MCF 10A (cell line): ENCODE measurements at regions of chr12 and their contacts with region 1.

Region 1: DNA sequence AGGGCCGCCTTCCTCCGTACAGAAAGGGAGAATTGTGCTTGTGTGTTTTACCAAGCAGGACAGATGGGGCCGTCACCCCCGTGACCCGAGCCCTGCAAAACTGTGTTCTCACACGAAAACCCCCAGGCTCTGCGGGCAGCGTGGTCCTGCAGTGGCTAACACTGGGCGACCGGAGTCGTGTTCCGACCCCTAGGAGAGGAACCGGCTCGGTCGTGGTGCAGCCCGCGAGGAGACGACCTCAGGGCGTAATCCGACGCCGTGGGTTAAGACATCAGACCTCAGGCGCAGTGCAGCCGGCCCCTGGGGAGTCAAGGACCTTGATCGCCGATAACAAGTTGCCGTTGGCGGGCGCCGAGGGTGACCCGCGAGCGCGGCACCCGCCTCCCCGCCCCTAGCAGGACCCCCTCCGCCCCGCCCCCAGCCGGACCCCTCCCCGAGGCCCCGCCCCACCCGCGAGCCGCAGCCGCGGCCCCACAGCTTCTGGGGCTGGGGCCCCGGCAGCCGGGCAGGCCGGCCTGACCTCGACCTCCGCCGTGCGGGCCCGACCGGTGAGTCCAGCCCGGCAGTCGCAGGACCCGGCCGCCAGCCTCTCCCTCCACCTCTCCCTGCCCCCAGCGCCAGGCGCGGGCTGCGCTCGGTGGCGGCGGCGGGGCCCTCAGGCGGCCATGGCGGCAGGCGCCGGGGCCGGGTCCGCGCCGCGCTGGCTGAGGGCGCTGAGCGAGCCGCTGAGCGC is at the start of gene CHPT1:
- DNase-seq: peak; percentile 52
- H3K4me3 Mint-ChIP-seq: peak within 1 kb of the TSS; percentile 91
- H3K27ac Mint-ChIP-seq: peak within 1 kb of the TSS; percentile 78
- H3K4me1 Mint-ChIP-seq: peaks cover 38% of the 10 kb centered on the region
- H3K27me3 Mint-ChIP-seq: no peaks in the 10 kb centered on the region
- CTCF ChIP-seq: no peak
- total RNA-seq, gene CHPT1: 28.1 and 33.5 TPM in 2 replicates

Region 2: GRCh38 chr12:101407436-101408345 is 289.7 kb before region 1 on chr12 and contains the start of gene ARL1:
- CTCF ChIA-PET with region 1: no interaction called
- POLR2A ChIA-PET with region 1: interaction called, 18 read pairs
- intact Hi-C with region 1: no loop called
- DNase-seq: peak; percentile 85
- H3K4me3 Mint-ChIP-seq: peak within 1 kb of the TSS; percentile 85
- H3K27ac Mint-ChIP-seq: peak within 1 kb of the TSS; percentile 96
- H3K4me1 Mint-ChIP-seq: peaks cover 10% of the 10 kb centered on the region
- H3K27me3 Mint-ChIP-seq: no peaks in the 10 kb centered on the region
- CTCF ChIP-seq: no peak
- total RNA-seq, gene ARL1: 112 and 175 TPM in 2 replicates

Region 3: DNA sequence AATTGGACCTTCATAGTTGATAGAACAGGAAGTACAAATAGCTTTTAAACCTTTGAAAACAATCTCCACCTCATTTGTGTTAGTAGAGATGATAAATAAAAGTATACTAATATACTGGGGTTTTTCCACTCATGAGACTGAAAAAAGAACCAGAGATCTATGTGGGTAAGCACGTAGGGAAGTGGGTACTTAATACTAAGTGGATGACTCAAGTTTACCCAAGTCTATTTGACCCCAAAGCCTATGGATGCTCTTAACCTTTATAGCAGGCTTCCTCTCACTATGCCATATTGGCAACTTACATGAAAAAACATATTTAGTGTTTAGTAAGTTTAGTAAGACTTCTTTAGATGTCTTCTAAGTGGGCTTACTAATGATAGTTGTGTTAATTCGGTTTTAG is 49.2 kb before region 1 on chr12:
- CTCF ChIA-PET with region 1: no interaction called
- POLR2A ChIA-PET with region 1: no interaction called
- intact Hi-C with region 1: no loop called
- DNase-seq: no peak
- H3K4me3 Mint-ChIP-seq: no peak overlapping the region
- H3K27ac Mint-ChIP-seq: no peak overlapping the region
- H3K4me1 Mint-ChIP-seq: no peaks in the 10 kb centered on the region
- H3K27me3 Mint-ChIP-seq: peaks cover 6% of the 10 kb centered on the region
- CTCF ChIP-seq: no peak

Region 4: GRCh38 chr12:101675555-101675954 is 21.8 kb before region 1 on chr12:
- CTCF ChIA-PET with region 1: no interaction called
- POLR2A ChIA-PET with region 1: no interaction called
- intact Hi-C with region 1: no loop called
- DNase-seq: no peak
- H3K4me3 Mint-ChIP-seq: no peak overlapping the region
- H3K27ac Mint-ChIP-seq: no peak overlapping the region
- H3K4me1 Mint-ChIP-seq: peaks cover 9% of the 10 kb centered on the region
- H3K27me3 Mint-ChIP-seq: no peaks in the 10 kb centered on the region
- CTCF ChIP-seq: no peak

Region 5: GRCh38 chr12:101784376-101784775 is 87.0 kb after region 1 on chr12:
- CTCF ChIA-PET with region 1: no interaction called
- POLR2A ChIA-PET with region 1: no interaction called
- intact Hi-C with region 1: no loop called
- DNase-seq: no peak
- H3K4me3 Mint-ChIP-seq: no peak overlapping the region
- H3K27ac Mint-ChIP-seq: no peak overlapping the region
- H3K4me1 Mint-ChIP-seq: no peaks in the 10 kb centered on the region
- H3K27me3 Mint-ChIP-seq: no peaks in the 10 kb centered on the region
- CTCF ChIP-seq: no peak